ENCODE measurements at regions of chr13 and their contacts with region 1.

Region 1: DNA sequence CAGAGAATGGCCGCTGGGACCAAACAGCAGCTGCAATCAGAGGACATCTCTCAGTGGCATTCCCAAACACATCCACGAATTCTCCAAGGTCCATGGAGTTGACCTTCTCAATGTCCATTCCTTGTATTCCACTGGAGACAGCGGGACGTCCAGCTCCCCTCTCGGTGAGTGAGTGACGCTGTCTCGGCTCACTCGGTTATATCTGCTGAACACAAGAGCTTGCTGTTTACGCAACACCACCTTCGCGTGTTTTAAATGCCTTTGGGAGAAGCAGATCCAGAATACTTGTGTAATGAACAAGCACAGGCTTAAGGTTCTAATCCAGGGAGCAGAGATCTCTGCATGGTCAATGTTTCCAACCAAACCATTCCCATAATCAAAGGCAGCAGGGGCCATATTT is at the start of gene URAD:
- DNase-seq: no peak
- ATAC-seq: no peak
- H3K4me3 ChIP-seq: no peak within 1 kb of the TSS
- H3K4me3 Mint-ChIP-seq: no peak within 1 kb of the TSS
- H3K27ac ChIP-seq: no peak within 1 kb of the TSS
- H3K27ac Mint-ChIP-seq: no peak within 1 kb of the TSS
- H3K4me1 ChIP-seq: no peaks in the 10 kb centered on the region
- H3K4me1 Mint-ChIP-seq: no peaks in the 10 kb centered on the region
- H3K27me3 ChIP-seq: peaks cover 0 to 36% of the 10 kb centered on the region in 2 experiments
- H3K27me3 Mint-ChIP-seq: peaks cover 29 to 32% of the 10 kb centered on the region in 2 donors
- total RNA-seq, gene URAD: not detected

Region 2: GRCh38 chr13:27374650-27375049 is 613.9 kb before region 1 on chr13:
- CTCF ChIA-PET with region 1: interaction called, 3 to 17 read pairs
- POLR2A ChIA-PET with region 1: no interaction called
- DNase-seq: peak in 33 of 35 experiments; percentile 8 to 75 (median 35)
- ATAC-seq: peak; percentile 79 to 89 (median 82)
- H3K4me3 ChIP-seq: no peak overlapping the region
- H3K4me3 Mint-ChIP-seq: no peak overlapping the region
- H3K27ac ChIP-seq: no peak overlapping the region
- H3K27ac Mint-ChIP-seq: no peak overlapping the region
- H3K4me1 ChIP-seq: peaks cover 0 to 5% of the 10 kb centered on the region in 2 experiments
- H3K4me1 Mint-ChIP-seq: peaks cover 2 to 11% (median 9%) of the 10 kb centered on the region in 3 donors
- H3K27me3 ChIP-seq: peaks cover 11 to 21% of the 10 kb centered on the region in 2 experiments
- H3K27me3 Mint-ChIP-seq: peaks cover 22% of the 10 kb centered on the region in 2 donors

Region 3: GRCh38 chr13:28128030-28128429 is 139.5 kb after region 1 on chr13:
- CTCF ChIA-PET with region 1: interaction called in 1 of 2 experiments, 3 read pairs
- POLR2A ChIA-PET with region 1: interaction called in 1 of 2 experiments, 12 read pairs
- DNase-seq: no peak
- ATAC-seq: no peak
- H3K4me3 ChIP-seq: no peak overlapping the region
- H3K4me3 Mint-ChIP-seq: no peak overlapping the region
- H3K27ac ChIP-seq: no peak overlapping the region
- H3K27ac Mint-ChIP-seq: no peak overlapping the region
- H3K4me1 ChIP-seq: no peaks in the 10 kb centered on the region
- H3K4me1 Mint-ChIP-seq: no peaks in the 10 kb centered on the region
- H3K27me3 ChIP-seq: no peaks in the 10 kb centered on the region
- H3K27me3 Mint-ChIP-seq: no peaks in the 10 kb centered on the region

Region 4: DNA sequence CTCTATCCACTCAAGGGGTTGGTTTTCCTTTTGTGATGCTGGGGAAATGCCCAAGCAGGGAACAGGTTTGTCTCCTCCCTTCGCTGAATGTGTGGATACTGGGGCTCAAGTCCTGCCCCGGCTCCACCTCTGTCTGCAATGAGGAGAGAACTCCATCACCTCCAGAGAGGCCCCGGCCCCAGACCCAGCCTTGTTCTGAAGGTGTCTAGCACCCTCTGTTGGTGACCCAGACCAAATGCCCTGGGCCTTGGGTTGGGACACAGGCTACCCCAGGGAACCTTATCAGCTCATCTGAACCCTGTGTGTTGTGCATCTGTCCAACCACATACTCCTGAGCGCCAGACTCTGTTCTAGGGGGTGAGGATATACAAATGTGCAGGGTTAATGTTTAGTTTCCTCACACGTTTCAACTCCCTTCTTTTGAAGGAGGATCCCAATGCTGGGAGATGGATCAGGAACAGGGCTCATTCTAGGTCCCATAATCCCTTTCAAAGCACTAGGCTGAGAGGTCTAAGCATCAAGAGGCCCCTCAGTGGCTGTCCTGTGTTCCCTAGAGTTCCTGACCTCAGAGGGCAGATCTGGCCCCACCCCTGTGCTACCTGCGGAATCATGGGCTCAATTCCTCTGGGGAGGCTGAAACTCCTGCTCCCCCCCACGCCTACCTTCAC is 1719.5 kb after region 1 on chr13:
- CTCF ChIA-PET with region 1: interaction called in 1 of 2 experiments, 10 read pairs
- POLR2A ChIA-PET with region 1: no interaction called
- DNase-seq: peak in 27 of 35 experiments; percentile 2 to 58 (median 27)
- ATAC-seq: peak; percentile 27 to 77 (median 54)
- H3K4me3 ChIP-seq: no peak overlapping the region
- H3K4me3 Mint-ChIP-seq: no peak overlapping the region
- H3K27ac ChIP-seq: no peak overlapping the region
- H3K27ac Mint-ChIP-seq: no peak overlapping the region
- H3K4me1 ChIP-seq: no peaks in the 10 kb centered on the region
- H3K4me1 Mint-ChIP-seq: no peaks in the 10 kb centered on the region
- H3K27me3 ChIP-seq: peaks cover 0 to 12% of the 10 kb centered on the region in 2 experiments
- H3K27me3 Mint-ChIP-seq: peaks cover 4 to 10% of the 10 kb centered on the region in 2 donors